ENCODE measurements at regions of chr6 and their contacts with region 1.

Region 1: DNA sequence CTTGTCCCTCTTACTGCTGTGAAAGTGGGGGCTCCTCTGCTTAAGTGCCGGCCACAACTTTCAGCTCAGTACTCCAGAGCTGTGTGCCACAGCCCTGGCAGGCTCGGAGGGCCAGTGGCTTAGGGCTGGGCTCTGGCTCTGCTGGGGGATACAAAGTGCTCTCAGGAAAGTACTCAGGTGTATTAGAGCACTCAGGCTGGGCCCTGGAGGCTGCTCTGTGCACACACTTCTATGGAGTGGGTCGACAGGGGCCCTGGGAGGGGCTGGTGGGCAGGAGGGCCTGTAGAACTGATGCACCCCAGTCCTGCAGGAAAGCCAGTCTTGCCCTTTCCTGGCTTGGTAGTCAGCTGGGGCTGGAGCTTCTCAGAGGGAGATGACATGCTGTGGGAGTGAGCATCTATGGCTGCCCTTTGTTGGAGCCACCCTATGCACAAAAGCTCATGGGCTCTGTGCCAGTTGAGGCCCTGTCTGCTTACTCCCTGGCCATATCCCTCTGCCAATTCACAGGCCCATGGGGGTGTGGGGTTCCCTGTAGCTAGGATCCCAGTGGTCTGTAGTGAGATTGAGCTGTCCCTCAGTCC is 22.0 kb downstream of the CENPW start:
- DNase-seq: no peak
- ATAC-seq: no peak
- H3K4me3 Mint-ChIP-seq: no peak overlapping the region
- H3K27ac Mint-ChIP-seq: no peak overlapping the region
- H3K4me1 Mint-ChIP-seq: no peaks in the 10 kb centered on the region
- H3K27me3 Mint-ChIP-seq: no peaks in the 10 kb centered on the region

Region 2: DNA sequence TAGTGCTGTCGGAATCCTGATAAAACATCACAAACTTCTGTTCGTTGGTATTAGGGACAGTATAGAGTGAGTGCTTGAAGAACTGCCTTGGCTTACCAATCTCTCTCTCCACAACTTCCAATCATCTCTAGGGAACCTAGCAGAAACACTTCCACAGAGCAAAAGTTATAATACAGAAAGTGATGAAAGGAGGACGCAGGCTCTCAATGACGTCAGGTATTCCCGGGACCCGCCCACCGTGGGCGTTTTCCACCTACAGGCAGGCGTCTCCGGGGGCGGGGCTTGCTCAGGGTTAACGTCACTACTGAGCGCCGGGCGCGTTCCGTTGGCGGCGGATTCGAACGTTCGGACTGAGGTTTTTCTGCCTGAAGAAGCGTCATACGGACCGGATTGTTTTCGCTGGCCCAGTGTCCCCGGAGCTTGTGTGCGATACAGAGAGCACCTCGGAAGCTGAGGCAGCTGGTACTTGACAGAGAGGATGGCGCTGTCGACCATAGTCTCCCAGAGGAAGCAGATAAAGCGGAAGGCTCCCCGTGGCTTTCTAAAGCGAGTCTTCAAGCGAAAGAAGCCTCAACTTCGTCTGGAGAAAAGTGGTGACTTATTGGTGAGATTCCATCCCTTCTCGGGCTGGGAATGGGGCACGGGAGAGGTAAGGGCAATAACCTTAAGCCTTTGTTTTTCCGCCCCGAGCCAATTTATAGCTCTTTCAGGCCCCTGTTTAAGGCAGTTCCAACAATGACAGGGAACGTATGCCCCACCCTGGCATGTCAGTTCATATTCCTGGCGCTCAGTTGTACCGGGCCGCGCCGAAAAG is 21.9 kb before region 1 on chr6 and contains the start of gene CENPW:
- CTCF ChIA-PET with region 1: interaction called, 14 read pairs
- POLR2A ChIA-PET with region 1: no interaction called
- DNase-seq: peak; percentile 98
- ATAC-seq: peak; percentile 95
- H3K4me3 Mint-ChIP-seq: no peak within 1 kb of the TSS
- H3K27ac Mint-ChIP-seq: no peak within 1 kb of the TSS
- H3K4me1 Mint-ChIP-seq: peaks cover 28% of the 10 kb centered on the region
- H3K27me3 Mint-ChIP-seq: no peaks in the 10 kb centered on the region
- total RNA-seq, gene CENPW: 74.5 to 75.4 TPM

Region 3: GRCh38 chr6:126747728-126748540 is 386.0 kb after region 1 on chr6:
- CTCF ChIA-PET with region 1: no interaction called
- POLR2A ChIA-PET with region 1: no interaction called
- DNase-seq: no peak
- ATAC-seq: no peak
- H3K4me3 Mint-ChIP-seq: no peak overlapping the region
- H3K27ac Mint-ChIP-seq: no peak overlapping the region
- H3K4me1 Mint-ChIP-seq: no peaks in the 10 kb centered on the region
- H3K27me3 Mint-ChIP-seq: no peaks in the 10 kb centered on the region

Measured in activated CD8-positive, alpha-beta T cell treated with anti-CD3 and anti-CD28 coated beads, Interleukin-2, amount 10 ng/mL, durations not matched to agents 7 days and 5 days (primary cell).